HEK293T (cell line): ENCODE measurements at regions of chr2 and their contacts with region 1.

Region 1: GRCh38 chr2:207625018-207625907 is at the start of gene METTL21A:
- DNase-seq: peak; percentile 78

Region 2: GRCh38 chr2:207529330-207530159 is 95.7 kb before region 1 on chr2 and contains the start of gene CREB1:
- CTCF ChIA-PET with region 1: interaction called, 4 read pairs
- POLR2A ChIA-PET with region 1: interaction called, 32 read pairs
- DNase-seq: peak; percentile 97

Region 3: GRCh38 chr2:207710814-207711740 is 85.8 kb after region 1 on chr2 and contains the start of gene CCNYL1:
- CTCF ChIA-PET with region 1: interaction called, 6 read pairs
- POLR2A ChIA-PET with region 1: interaction called, 25 read pairs
- DNase-seq: peak; percentile 99

Region 4: DNA sequence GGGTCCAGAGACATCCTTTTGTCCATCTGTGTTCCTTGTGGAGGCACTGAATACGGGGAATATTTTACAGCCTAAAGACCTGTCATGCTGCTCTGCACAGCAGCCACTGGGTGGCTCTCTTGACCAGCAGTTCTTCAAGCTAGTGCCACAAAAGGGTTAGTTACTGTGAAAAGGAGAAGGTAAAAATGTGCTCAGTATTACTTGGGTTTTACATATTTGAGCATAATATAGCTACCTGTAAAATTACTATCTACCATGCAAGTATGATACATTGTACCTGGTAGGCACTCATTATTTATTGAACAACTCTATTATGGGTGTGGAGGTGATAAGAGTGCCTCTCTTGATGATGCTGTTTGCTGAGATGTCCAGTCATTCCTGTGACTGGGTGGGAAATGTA is 120.9 kb after region 1 on chr2:
- CTCF ChIA-PET with region 1: interaction called, 10 read pairs
- POLR2A ChIA-PET with region 1: interaction called, 10 read pairs
- DNase-seq: peak; percentile 74